ENCODE measurements at regions of chr7 and their contacts with region 1.

Region 1: GRCh38 chr7:28427236-28427635 is 14.9 kb downstream of the CREB5 start:
- DNase-seq: no peak
- CTCF ChIP-seq: no peak

Region 2: GRCh38 chr7:28410628-28411531 is 16.4 kb before region 1 on chr7:
- CTCF ChIA-PET with region 1: interaction called, 12 read pairs
- POLR2A ChIA-PET with region 1: no interaction called
- DNase-seq: peak; percentile 26
- CTCF ChIP-seq: no peak

Region 3: GRCh38 chr7:28484606-28484935 is 57.3 kb after region 1 on chr7:
- CTCF ChIA-PET with region 1: no interaction called
- POLR2A ChIA-PET with region 1: no interaction called
- DNase-seq: no peak
- CTCF ChIP-seq: no peak

Measured in GM10248 (cell line).